ENCODE measurements at regions of chr1 and their contacts with region 1.

Region 1: DNA sequence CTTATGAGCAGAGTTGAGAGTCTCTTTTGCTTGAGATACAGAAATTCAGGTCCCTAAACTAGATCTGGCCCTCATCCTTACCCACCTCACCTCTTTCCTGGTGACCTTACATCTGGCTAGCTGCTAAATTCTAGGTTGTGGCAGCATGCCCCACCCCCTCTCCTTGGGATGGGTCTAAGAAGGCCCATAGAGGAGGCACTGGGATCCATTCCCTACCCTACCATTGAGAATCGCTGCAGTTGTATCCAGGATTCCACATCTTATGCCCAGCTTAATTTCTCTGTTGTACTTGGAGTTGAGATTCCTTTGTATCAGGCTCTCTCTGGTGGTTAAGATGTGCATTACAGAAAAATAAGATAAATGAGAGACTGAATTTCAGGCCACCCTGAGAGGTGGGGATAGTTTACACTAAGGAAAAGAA is 9.5 kb upstream of the TMEM39B start:
- H3K4me3 ChIP-seq: no peak overlapping the region
- H3K27ac ChIP-seq: peak overlapping the region; percentile 35
- H3K4me1 ChIP-seq: peaks cover 15% of the 10 kb centered on the region
- CTCF ChIP-seq: peak; percentile 66

Region 2: DNA sequence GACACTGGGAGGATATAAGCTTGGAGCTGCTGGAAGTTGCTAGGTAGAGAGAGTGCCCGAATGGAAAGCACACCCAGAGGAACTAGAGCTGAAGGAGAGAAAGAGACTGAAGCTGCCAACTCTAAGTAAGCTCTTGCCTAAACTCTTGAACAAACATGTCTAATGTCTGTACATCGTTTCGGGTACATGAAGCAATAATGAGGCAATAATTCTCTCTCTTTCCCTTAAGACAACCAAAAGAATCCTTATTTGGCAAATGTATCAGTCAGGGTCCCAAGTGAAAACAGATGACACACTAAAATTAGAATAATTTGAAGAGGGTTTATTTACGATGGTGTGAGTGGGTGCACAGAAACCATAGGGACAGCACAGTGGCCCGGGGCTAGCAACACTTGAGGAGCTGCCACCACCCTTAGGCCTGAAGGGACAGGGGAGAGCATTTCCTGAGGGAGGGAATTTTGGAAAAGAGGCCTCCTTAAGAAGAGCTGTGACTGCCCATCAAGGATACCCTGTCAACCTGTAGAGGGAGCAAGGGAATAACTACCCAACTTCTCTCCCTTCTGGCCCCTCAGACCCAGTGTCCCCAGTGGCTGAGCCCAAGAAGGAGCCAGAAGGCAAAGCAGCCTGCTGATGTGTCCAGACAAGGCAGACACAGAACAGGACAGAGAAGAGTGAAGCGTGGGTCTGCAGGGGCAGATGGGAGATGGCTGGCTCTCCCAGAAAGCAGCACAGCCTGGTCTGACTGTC is 85.7 kb before region 1 on chr1:
- CTCF ChIA-PET with region 1: interaction called, 24 read pairs
- POLR2A ChIA-PET with region 1: interaction called, 3 read pairs
- H3K4me3 ChIP-seq: no peak overlapping the region
- H3K27ac ChIP-seq: no peak overlapping the region
- H3K4me1 ChIP-seq: no peaks in the 10 kb centered on the region
- CTCF ChIP-seq: peak; percentile 74

Region 3: DNA sequence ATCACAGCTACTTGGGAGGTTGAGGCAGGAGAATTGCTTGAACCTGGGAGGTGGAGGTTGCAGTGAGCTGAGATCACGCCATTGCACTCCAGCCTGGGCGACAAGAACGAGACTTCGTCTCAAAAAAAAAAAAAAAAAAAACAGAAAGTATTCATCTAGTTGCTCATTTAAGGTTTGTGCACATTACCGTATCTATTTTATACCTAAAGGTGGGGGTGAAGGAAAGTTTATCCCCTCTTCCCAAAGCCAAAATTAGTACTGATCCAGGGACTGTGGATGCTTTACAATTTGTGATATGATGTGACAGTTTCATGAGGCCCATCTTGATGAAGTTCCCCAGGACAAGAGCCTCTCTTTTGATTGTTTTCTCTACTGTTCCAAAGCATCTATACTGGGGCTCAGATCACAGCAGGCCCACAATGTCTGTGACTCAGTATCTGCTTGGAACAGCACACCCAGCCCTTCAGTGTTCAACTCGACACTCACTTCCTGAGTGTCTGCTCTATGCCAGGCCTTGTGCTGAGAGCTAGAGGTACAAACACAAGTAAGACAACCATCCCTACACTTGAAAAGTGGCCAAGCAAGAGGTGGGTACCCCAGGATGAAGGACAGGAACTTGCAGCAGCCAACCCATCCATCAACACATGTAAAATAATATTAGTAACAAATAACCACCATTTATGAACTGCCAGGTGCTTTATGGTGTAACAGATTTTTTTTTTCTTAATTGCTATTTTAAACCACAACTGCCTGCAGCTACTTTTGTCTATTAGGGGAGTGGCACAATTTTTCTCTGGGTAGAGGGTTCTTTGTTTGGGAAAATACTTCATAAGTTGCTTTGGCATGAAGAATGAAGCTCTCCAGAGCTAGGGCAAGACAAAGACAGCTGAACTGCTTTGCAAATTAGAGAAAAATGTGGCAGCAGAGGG is 78.6 kb before region 1 on chr1:
- CTCF ChIA-PET with region 1: interaction called, 13 read pairs
- POLR2A ChIA-PET with region 1: no interaction called
- H3K4me3 ChIP-seq: no peak overlapping the region
- H3K27ac ChIP-seq: no peak overlapping the region
- H3K4me1 ChIP-seq: no peaks in the 10 kb centered on the region
- CTCF ChIP-seq: no peak

Region 4: GRCh38 chr1:32013386-32014198 is 49.7 kb before region 1 on chr1 and contains the start of gene KHDRBS1:
- CTCF ChIA-PET with region 1: interaction called, 3 read pairs
- POLR2A ChIA-PET with region 1: interaction called, 10 read pairs
- H3K4me3 ChIP-seq: peak within 1 kb of the TSS; percentile 95
- H3K27ac ChIP-seq: peak within 1 kb of the TSS; percentile 81
- H3K4me1 ChIP-seq: 0 out of 2 replicates have a peak, but pooled peaks cover 2% of the 10 kb centered on the region
- CTCF ChIP-seq: no peak

Region 5: DNA sequence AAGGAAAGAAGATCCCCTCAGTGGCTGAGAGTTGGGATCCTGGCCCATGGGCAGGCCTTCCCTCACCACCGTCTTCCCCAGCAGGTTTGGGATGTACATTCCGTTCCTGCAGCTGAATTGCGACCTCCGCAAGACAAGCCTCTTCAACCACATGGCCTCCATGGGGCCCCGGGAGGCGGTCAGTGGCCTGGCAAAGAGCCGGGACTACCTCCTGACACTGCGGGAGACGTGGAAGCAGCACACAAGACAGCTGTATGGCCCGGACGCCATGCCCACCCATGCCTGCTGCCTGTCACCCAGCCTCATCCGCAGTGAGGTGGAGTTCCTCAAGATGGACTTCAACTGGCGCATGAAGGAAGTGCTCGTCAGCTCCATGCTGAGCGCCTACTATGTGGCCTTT is 28.3 kb after region 1 on chr1:
- CTCF ChIA-PET with region 1: no interaction called
- POLR2A ChIA-PET with region 1: no interaction called
- H3K4me3 ChIP-seq: no peak overlapping the region
- H3K27ac ChIP-seq: no peak overlapping the region
- H3K4me1 ChIP-seq: no peaks in the 10 kb centered on the region
- CTCF ChIP-seq: no peak

Region 6: DNA sequence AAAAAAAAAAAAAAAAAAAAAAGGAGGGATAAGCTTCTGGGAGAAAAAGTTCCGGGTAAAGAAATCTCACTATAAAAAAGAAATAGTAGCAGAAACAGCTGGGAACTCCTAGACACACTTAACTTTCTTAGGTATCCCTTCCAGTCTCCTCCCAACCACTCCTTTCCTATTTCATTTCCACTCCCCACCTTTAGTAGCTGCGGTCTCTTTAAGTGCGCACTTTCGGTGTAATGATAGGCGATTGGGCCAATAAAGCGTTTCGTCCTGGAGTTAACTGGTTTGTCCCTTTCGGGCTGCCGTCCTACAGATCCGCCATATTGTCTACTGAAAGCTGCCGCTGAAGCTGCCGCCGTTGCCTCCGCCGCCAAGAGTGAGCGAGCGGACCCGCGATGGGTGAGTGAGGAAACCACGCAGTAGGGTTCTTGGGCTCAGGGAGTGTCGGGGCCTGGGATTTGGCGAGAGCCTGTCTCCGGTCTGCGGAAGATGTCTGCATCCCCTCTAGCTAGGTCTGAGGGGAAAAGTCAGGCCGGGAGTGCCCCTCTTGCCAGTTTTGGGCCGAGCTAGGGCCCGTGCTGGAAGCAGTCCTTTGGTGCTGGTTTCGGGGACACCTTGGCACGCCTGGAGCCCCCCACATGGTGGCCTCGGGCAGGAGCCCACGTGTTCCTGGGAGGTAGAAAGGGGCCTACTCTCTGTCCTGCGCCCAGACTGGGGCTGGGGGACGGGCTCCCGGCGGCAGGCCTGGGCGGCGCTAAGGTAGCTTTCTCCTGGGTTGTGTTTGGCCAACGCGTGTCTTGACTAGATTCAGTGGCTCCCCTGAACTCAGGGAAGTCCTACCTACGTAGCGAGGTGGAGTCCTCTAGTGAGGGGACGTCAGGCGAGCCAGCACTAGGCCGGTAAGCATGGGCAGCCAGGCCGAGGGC is 44.7 kb after region 1 on chr1 and contains the start of gene KPNA6:
- CTCF ChIA-PET with region 1: no interaction called
- POLR2A ChIA-PET with region 1: interaction called, 12 read pairs
- H3K4me3 ChIP-seq: peak within 1 kb of the TSS; percentile 94
- H3K27ac ChIP-seq: peak within 1 kb of the TSS; percentile 72
- H3K4me1 ChIP-seq: peaks cover 9% of the 10 kb centered on the region
- CTCF ChIP-seq: no peak

Measured in HEK293 (cell line).